ENCODE measurements at regions of chr9 and their contacts with region 1.

Region 1: GRCh38 chr9:129884220-129885017 is 49.2 kb downstream of the USP20 start:
- DNase-seq: peak; percentile 82 to 88 (median 83)
- H3K4me3 ChIP-seq: peak overlapping the region; percentile 27
- H3K27ac ChIP-seq: no peak overlapping the region
- H3K4me1 ChIP-seq: peaks cover 9% of the 10 kb centered on the region
- H3K27me3 ChIP-seq: no peaks in the 10 kb centered on the region
- CTCF ChIP-seq: no peak
- EP300 ChIP-seq: no peak
- POLR2A ChIP-seq: no peak

Region 2: DNA sequence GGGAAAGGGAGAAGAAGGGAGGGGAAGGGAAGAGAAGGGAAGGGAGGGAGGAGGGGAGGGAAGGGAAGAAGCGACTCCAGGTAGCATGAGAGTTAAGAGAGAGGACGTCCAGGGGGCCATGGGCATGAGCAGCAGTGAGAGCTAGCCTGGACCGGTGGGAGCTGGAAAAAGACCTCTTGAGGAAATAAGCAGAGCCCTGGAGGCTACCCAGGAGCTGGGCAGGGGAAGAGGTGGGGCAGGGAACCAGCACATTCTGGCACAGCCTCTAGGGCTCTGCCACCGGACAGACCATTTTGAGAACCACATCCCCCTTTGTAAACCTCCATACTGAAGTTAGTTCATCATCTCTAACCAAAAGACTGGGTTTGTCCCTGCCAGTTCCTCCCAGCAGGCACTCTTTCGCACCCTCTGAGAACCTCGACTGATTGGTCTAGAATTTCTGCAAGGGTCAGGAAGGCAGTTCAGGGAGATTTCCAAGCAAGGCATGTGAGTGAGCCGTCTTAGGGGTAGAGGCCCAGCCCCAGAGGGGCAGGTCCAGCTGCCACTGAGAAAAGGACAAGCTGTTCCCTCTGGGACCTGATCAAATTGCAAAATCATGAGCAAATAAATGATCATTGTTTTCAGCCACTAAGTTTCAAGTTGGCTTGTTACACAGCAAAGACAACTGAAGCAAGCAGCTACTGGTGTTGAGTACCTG is 1828.9 kb before region 1 on chr9:
- intact Hi-C with region 1: loop called in 1 of 4 experiments (anchors 5 kb)
- DNase-seq: peak; percentile 59 to 69 (median 60)
- H3K4me3 ChIP-seq: no peak overlapping the region
- H3K27ac ChIP-seq: peak overlapping the region; percentile 42 to 89
- H3K4me1 ChIP-seq: peaks cover 21% of the 10 kb centered on the region
- H3K27me3 ChIP-seq: no peaks in the 10 kb centered on the region
- CTCF ChIP-seq: no peak
- EP300 ChIP-seq: peak; percentile 58
- POLR2A ChIP-seq: no peak

Region 3: DNA sequence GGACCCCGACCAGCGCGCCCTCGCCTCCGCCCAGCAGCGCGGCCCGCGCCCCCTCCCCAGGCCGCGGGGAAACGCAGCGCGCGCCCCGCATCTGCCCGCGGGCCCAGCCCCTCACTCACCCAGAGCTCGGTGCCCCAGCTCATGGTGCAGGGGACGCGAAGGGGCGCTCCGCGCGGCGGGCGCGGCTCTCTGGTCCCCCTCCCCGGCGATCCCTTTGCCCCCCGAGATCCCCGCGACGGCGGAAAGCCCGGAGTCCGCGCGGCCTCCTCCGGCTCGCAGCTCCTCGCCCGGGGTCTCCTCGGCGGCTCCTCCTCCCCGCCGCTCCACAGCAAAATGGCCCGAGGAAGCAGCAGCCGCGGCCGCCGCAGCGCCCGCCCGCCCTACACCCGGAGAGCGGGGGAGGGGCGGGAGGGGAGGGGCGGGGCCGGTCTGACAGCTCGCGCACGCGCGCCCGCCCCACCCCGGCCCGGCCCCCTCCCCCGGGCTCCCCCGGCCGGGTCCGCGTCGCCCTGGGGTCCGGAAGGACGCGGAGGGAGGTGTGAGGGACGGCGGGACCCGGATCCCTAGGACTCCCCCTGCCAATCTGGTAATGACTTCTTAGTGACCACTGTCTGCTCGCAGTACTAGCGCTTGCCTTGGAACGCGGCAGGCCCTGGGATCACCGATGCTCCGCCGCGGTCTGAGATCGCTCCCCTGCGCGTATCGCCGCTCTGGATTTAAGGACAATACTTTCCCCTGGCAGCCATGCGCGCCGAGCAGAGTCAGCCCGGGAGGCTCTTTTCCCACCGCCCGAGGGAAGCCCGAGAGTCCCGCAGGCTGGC is 158.6 kb after region 1 on chr9 and contains the start of gene FNBP1:
- intact Hi-C with region 1: loop called in 3 of 4 experiments (anchors 2 to 5 kb)
- DNase-seq: peak; percentile 81 to 89 (median 86)
- H3K4me3 ChIP-seq: peak within 1 kb of the TSS; percentile 90
- H3K27ac ChIP-seq: peak within 1 kb of the TSS; percentile 90 to 94
- H3K4me1 ChIP-seq: peaks cover 6% of the 10 kb centered on the region
- H3K27me3 ChIP-seq: no peaks in the 10 kb centered on the region
- CTCF ChIP-seq: peak in 1 of 3 donors; percentile 3
- EP300 ChIP-seq: no peak
- POLR2A ChIP-seq: peak; percentile 75
- total RNA-seq, gene FNBP1: 22.4 to 57.8 (median 49.0) TPM

Region 4: GRCh38 chr9:130095872-130096271 is 211.5 kb after region 1 on chr9:
- intact Hi-C with region 1: loop called in 2 of 4 experiments (anchors 5 kb)
- DNase-seq: no peak
- H3K4me3 ChIP-seq: no peak overlapping the region
- H3K27ac ChIP-seq: no peak overlapping the region
- H3K4me1 ChIP-seq: no peaks in the 10 kb centered on the region
- H3K27me3 ChIP-seq: no peaks in the 10 kb centered on the region
- CTCF ChIP-seq: no peak
- EP300 ChIP-seq: no peak
- POLR2A ChIP-seq: no peak

Region 5: DNA sequence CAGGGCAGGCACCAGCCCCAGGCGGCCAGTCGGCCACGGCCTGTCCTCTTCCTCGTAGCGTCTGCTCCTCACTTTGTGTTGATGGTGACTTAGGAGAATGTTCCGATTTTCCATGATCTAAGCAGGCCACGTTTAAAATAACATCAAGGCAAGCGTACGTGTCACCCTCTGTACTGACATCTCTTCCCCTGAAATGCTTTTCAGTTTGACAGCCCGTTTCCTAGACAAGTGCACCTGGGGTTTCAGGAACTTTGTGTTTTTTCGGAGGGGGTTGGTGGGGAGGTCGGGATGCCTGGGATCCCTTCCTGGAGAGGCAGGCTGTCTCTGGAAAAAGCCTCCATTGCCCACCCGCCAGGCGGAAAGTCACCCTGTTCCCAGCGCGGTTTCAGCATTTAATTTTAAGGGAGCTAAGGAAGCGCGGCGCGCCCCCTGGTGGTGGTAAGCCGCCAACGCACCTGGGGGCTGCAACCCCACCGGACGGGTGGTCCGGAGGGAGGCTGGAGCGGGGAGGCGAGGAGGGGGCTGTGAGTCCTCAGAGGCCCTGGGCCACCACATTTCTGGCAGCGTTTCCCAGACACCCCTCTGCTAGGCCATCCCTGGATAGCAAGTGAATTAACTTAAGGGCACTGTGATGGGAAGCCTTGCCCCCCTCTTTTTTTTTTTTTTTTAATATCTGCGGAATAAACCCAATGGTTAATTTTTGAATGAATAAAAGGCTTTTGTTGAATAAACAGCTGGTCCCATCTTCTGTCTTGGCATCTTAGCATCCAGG is 351.7 kb after region 1 on chr9:
- intact Hi-C with region 1: loop called in 3 of 4 experiments (anchors 5 to 10 kb)
- DNase-seq: peak; percentile 63 to 86 (median 79)
- H3K4me3 ChIP-seq: no peak overlapping the region
- H3K27ac ChIP-seq: no peak overlapping the region
- H3K4me1 ChIP-seq: peaks cover 3% of the 10 kb centered on the region
- H3K27me3 ChIP-seq: no peaks in the 10 kb centered on the region
- CTCF ChIP-seq: peak; percentile 96 to 99 (median 98)
- EP300 ChIP-seq: no peak
- POLR2A ChIP-seq: peak; percentile 17

Measured in ovary (tissue), 10 donors.